ENCODE measurements at regions of chr5 and their contacts with region 1.

Region 1: DNA sequence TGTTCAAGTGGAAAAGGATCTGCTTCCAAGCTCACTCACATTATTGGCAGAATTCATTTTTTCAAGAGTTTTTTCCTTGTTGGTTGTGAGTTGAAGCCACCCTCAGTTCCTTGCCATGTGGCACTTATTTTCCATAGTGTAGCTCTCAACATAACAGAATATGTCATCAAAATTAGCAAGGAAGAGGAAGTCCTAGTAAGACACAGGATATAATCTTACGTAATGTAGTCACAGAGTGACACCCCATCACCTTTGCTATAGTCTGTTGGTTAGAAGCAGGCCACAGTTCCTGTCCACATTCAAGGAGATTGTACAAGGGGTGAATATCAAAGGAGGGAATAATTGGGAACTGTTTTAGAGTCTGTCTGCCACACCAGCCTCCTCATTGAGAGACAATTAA is 15.7 kb downstream of the IRGM start:
- DNase-seq: no peak
- ATAC-seq: no peak
- H3K4me3 ChIP-seq: no peak overlapping the region
- H3K4me3 Mint-ChIP-seq: no peak overlapping the region
- H3K27ac ChIP-seq: no peak overlapping the region
- H3K27ac Mint-ChIP-seq: no peak overlapping the region
- H3K4me1 ChIP-seq: no peaks in the 10 kb centered on the region
- H3K4me1 Mint-ChIP-seq: no peaks in the 10 kb centered on the region
- H3K27me3 ChIP-seq: no peaks in the 10 kb centered on the region
- H3K27me3 Mint-ChIP-seq: no peaks in the 10 kb centered on the region
- CTCF ChIP-seq: no peak

Region 2: GRCh38 chr5:150829744-150830143 is 32.3 kb before region 1 on chr5:
- CTCF ChIA-PET with region 1: no interaction called
- POLR2A ChIA-PET with region 1: no interaction called
- intact Hi-C with region 1: no loop called
- DNase-seq: no peak
- ATAC-seq: no peak
- H3K4me3 ChIP-seq: no peak overlapping the region
- H3K4me3 Mint-ChIP-seq: no peak overlapping the region
- H3K27ac ChIP-seq: no peak overlapping the region
- H3K27ac Mint-ChIP-seq: no peak overlapping the region
- H3K4me1 ChIP-seq: no peaks in the 10 kb centered on the region
- H3K4me1 Mint-ChIP-seq: no peaks in the 10 kb centered on the region
- H3K27me3 ChIP-seq: no peaks in the 10 kb centered on the region
- H3K27me3 Mint-ChIP-seq: no peaks in the 10 kb centered on the region
- CTCF ChIP-seq: no peak

Region 3: DNA sequence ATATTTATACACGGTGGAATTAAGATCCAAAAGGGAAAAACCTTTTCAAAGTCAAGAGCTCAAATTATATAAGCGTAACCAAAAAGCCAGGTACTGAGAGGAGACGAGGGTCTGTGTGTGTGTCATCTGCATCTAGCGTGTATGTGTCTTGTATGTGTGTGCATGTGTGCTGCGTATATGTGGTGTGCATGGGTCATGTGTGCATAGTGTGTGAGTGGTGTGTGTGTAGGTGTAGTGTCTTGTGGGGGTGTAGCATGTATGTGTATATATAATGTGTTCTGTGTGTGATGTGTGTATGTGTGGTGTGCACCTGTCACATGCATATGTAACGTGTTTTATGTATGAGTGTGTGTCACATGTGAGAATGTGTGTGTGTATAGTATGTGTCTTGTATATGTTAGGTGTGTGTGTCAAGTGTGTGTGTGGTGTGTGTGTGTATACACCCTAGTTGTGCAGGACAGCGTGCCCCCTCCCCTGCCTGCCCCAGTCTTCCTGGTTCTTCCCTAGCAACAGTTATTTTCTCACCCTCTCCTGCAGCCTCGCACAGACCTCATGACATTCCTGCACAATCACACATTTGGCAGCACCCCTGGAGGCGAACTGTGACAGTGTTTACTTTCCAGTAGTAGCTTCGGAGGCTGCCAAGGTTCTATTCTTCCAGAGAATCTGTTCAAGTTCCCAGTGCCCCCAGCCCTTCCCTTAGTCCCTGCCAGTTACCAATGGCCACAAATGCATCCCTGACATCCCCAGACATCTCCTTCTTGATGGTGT is 245.9 kb after region 1 on chr5:
- CTCF ChIA-PET with region 1: no interaction called
- POLR2A ChIA-PET with region 1: no interaction called
- intact Hi-C with region 1: loop called in 1 of 2 experiments (anchors 10 kb)
- DNase-seq: no peak
- ATAC-seq: no peak
- H3K4me3 ChIP-seq: no peak overlapping the region
- H3K4me3 Mint-ChIP-seq: no peak overlapping the region
- H3K27ac ChIP-seq: no peak overlapping the region
- H3K27ac Mint-ChIP-seq: peak overlapping the region; percentile 69
- H3K4me1 ChIP-seq: no peaks in the 10 kb centered on the region
- H3K4me1 Mint-ChIP-seq: no peaks in the 10 kb centered on the region
- H3K27me3 ChIP-seq: no peaks in the 10 kb centered on the region
- H3K27me3 Mint-ChIP-seq: no peaks in the 10 kb centered on the region
- CTCF ChIP-seq: no peak